Adrenal gland (tissue), 19 donors: ENCODE measurements at regions of chr9 and their contacts with region 1.

Region 1: DNA sequence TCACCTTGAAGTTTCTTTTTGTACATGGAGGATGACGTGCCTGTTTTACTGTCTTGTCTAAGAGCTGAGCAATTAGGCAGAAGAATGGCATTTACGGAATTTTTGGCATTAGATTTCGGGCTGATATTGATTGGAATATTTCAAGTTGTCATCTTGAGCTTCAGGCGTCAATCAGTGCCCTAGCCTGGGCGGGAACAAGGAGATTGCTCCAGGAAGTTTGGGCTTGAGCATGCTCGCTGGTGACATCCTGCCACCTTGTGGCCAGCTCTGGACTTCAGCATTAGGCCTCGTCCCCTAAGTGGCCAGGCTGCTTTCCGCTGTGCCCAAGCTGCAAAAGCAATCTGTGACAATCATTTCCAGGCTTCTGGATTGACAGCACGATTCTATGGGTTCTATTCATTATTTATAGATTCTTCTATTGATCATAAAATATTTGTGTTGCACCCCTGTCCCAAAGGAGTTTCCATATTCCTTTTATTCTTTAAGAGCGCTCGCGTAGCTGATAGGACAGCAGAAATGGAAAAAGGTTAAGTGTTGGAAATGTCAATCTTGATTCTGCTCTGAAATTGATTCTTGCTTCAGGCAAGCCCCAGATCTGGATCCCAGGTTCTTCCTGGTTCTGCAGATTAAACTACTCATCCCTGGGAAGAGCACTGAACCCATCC is 79.3 kb downstream of the SLC28A3 start:
- DNase-seq: peak; percentile 81 to 95 (median 89)
- H3K4me3 ChIP-seq: peak overlapping the region in 3 of 4 donors; percentile 4 to 72 (median 28)
- H3K27ac ChIP-seq: peak overlapping the region in 2 of 5 donors; percentile 40 to 51
- H3K4me1 ChIP-seq: no peaks in the 10 kb centered on the region
- H3K27me3 ChIP-seq: no peaks in the 10 kb centered on the region
- CTCF ChIP-seq: peak; percentile 81 to 96 (median 94)
- POLR2A ChIP-seq: no peak

Region 2: DNA sequence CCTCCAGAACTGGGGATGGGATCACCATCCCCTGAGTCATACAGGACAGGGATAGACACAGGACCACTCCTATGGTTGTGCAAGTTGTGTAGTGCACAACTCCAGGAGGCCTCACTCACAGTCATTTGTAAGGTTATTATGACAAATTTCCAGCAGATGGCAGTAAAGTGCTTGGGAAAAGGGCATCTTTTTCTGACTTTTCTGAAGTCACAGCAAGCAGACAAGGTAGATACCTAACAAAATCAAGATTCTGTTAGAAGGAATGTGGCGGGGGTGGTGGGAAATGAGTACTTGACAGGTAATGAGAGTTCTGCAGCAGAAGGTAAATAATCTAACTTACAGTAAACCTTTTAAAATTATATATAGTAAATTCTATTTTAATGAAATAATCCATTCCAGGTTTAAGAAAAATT is 323.3 kb before region 1 on chr9:
- intact Hi-C with region 1: loop called (anchors 5 kb)
- DNase-seq: peak in 1 of 7 donors; percentile 19
- H3K4me3 ChIP-seq: no peak overlapping the region
- H3K27ac ChIP-seq: no peak overlapping the region
- H3K4me1 ChIP-seq: peaks cover 0 to 16% of the 10 kb centered on the region in 2 donors
- H3K27me3 ChIP-seq: no peaks in the 10 kb centered on the region
- CTCF ChIP-seq: peak; percentile 36 to 81 (median 68)
- POLR2A ChIP-seq: no peak

Region 3: DNA sequence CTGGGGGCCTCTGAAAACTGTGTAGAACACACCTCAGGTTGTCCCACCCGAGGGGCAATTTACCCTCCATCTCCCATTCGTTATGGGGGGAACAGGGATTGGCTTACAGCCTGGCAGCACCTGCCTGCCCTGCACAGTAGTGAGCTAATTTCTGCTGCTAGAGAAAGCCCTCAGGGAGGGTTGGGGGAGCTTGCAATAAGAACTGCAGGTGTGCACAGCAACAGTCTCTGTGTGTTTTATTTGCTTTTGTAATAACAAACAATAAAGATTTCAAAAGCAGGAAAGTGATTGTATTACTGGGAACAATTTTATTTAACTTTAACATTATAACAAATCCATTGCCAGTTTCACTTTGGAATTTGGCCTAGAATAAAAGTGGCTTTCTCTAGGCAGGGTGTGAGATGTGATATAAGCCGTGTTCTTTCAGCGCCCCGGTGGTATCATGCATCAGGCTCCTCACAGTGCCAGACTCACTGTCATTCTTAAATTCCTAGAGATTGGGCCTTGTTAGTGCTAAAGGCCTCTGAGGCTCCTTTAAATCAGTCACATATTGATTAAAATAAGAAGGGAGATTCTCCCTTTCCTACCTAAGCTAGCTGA is 199.5 kb before region 1 on chr9:
- intact Hi-C with region 1: no loop called
- DNase-seq: no peak
- H3K4me3 ChIP-seq: no peak overlapping the region
- H3K27ac ChIP-seq: no peak overlapping the region
- H3K4me1 ChIP-seq: peaks cover 2 to 3% of the 10 kb centered on the region in 2 donors
- H3K27me3 ChIP-seq: no peaks in the 10 kb centered on the region
- CTCF ChIP-seq: no peak
- POLR2A ChIP-seq: no peak

Region 4: DNA sequence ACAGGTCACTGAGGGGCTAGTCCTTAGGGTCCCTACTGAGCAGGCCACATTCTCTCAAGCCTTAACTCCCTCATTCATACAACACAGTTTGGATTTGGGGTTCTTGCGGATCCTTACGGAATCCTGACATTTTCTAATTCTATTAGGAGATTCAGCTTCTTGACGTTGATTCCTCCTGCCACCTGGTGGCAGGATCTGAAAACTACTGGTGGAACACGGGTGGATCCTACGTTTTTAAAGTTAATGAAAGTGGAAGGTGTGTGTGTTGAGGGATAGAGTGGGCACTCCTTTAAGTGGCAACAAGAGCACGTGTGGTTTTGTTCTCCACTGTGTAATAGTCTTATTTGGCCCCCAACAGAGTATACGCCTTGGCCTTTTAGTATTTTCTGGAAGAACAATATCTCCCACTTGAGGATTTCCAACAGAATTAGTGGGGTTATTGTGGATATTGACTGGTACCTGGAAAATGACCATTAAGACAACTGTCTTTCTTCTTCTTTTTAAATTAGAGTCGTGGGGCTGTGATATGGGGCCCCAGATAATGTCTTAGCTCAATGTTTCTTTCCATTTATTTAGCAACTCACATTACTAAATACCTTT is 54.2 kb after region 1 on chr9:
- intact Hi-C with region 1: loop called in 1 of 2 experiments (anchors 5 kb)
- DNase-seq: peak; percentile 45 to 89 (median 70)
- H3K4me3 ChIP-seq: no peak overlapping the region
- H3K27ac ChIP-seq: no peak overlapping the region
- H3K4me1 ChIP-seq: peaks cover 4 to 15% of the 10 kb centered on the region in 2 donors
- H3K27me3 ChIP-seq: no peaks in the 10 kb centered on the region
- CTCF ChIP-seq: peak; percentile 67 to 85 (median 80)
- POLR2A ChIP-seq: no peak

Region 5: GRCh38 chr9:84331119-84331809 is 70.0 kb after region 1 on chr9:
- intact Hi-C with region 1: no loop called
- DNase-seq: no peak
- H3K4me3 ChIP-seq: no peak overlapping the region
- H3K27ac ChIP-seq: no peak overlapping the region
- H3K4me1 ChIP-seq: no peaks in the 10 kb centered on the region
- H3K27me3 ChIP-seq: no peaks in the 10 kb centered on the region
- CTCF ChIP-seq: no peak
- POLR2A ChIP-seq: no peak

Region 6: DNA sequence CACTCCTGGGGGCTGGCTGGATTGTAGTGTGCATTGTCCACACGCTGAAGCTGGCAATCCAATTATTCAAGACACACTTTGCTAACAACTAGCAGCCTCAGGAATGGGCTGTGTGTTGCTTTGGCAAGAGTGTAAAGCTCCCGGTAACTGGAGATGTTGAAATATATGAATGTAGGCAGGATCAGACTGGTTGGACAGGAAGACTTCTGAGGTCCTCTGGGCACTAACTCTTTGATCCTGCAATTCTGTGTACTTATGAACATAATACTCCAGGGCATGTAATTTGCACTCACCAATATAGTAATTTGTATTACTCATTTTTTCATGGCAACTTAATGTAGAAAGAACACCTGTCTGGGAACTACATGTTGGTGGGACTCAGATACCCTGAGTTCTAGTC is 186.1 kb after region 1 on chr9:
- intact Hi-C with region 1: no loop called
- DNase-seq: no peak
- H3K4me3 ChIP-seq: no peak overlapping the region
- H3K27ac ChIP-seq: no peak overlapping the region
- H3K4me1 ChIP-seq: no peaks in the 10 kb centered on the region
- H3K27me3 ChIP-seq: no peaks in the 10 kb centered on the region
- CTCF ChIP-seq: no peak
- POLR2A ChIP-seq: no peak